ENCODE measurements at regions of chr17 and their contacts with region 1.

Region 1: DNA sequence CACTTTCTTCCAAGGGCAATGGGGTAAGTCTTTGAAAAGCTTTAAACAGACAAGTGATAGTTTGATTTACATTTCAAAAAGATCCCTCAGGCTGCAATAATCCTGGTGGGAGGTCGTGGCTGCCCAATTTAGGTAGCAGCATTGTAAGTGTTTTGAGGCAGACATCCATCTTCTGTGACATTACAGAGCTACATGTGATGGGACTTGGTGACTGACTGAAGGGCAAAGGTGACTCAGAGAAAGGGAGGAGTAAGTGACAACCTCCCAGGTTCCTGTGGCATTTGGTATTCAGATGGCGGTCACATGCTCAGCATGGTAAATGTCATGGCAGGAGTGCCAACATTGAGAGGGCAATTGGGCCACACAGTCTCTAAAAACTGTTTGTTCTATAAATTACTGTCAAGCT is 26.5 kb downstream of the STAT3 start:
- DNase-seq: no peak
- ATAC-seq: peak; percentile 58
- H3K4me3 Mint-ChIP-seq: no peak overlapping the region
- H3K27ac Mint-ChIP-seq: no peak overlapping the region
- H3K4me1 Mint-ChIP-seq: peaks cover 69% of the 10 kb centered on the region
- H3K27me3 Mint-ChIP-seq: no peaks in the 10 kb centered on the region
- CTCF ChIP-seq: no peak

Region 2: DNA sequence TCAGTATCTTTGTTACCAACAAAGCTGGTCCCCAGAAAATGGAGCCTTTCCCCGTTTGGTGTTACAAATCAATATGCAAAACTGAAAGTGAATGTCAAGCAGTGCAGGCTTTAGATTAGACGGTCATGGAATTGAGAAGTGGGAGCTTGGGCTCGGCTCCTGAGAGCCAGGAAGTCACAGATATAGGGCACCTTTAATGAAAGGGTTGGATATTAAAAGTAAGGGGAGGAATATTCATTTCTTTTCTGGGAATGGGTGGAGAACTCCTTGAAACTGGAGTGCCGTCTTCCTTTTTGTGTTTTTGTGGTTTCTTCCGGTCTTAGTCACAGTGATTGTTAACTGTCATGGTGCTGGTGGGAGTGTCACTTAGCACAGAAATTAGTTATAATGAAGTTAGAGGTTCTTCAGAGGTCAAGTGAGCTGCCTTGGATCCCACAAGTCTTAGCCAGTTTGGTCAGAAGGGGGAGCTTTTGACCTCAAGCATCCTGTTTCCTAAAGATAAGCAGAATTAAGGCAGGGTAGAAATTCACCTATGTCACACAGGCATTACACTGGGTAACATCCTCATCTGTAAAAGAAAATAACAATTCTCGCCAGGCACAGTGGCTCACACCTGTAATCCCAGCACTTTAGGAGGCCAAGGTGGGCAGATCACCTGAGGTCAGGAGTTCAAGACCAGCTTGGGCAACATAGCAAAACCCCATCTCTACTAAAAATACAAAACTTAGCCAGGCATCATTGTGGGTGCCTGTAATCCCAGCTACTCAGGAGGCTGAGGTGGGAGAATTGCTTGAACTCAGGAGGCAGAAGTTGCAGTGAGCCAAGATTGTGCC is 682.7 kb before region 1 on chr17:
- CTCF ChIA-PET with region 1: no interaction called
- POLR2A ChIA-PET with region 1: no interaction called
- intact Hi-C with region 1: no loop called
- DNase-seq: no peak
- ATAC-seq: peak; percentile 57
- H3K4me3 Mint-ChIP-seq: peak overlapping the region; percentile 80
- H3K27ac Mint-ChIP-seq: peak overlapping the region; percentile 91
- H3K4me1 Mint-ChIP-seq: peaks cover 45% of the 10 kb centered on the region
- H3K27me3 Mint-ChIP-seq: no peaks in the 10 kb centered on the region
- CTCF ChIP-seq: no peak

Region 3: DNA sequence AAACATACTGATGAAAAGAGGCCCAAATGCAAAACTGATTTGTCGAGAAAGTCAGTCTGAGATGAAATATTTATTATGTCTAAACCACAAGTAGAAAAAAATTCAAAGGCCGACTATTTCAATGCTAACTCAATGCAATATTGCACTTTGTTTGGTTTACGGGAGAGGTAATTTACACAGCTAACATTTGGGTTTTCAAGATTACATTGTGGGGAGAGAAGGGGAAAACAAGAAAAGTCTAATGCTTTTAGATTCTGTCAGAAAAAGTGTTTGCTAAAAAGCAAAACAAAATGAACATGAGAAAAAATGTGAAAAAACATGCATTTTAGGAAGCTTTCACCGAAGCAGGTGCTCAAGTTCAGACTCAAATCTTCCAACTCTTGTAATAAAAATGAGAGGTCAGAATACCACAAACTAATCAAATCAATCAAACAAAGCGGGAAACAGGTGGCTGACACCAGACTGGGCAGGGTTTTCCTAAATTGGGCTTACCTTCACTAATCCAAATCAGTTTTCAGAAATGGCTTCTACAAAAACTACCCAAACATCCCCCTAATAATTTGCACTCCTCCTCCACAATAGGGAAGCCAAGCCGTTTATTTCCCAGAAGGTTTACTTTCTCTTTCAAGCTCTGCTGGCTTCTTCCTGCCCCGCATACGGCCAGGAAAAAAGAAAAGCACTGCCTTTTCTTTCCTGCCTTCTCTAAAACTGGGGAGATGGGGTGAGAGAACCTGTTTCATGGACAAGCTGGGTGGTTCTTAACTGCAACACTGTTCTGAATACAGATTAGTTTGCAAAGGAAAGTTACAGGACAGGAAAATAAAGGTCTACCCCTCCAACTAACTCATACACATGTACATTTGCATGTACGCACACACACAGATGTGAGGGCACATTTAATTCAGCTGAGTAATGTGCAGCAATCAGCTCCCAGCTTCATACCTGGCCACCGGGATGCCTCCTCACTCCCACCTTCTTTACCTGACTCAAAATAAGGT is 17.1 kb after region 1 on chr17:
- CTCF ChIA-PET with region 1: no interaction called
- POLR2A ChIA-PET with region 1: interaction called, 5 read pairs
- intact Hi-C with region 1: loop called (anchors 2 kb)
- DNase-seq: no peak
- ATAC-seq: peak; percentile 78
- H3K4me3 Mint-ChIP-seq: peak overlapping the region; percentile 84
- H3K27ac Mint-ChIP-seq: peak overlapping the region; percentile 93
- H3K4me1 Mint-ChIP-seq: peaks cover 64% of the 10 kb centered on the region
- H3K27me3 Mint-ChIP-seq: no peaks in the 10 kb centered on the region
- CTCF ChIP-seq: no peak

Measured in activated B cell treated with CpG ODN at 0.5 μM for 24 hours (primary cell).